ENCODE measurements at regions of chr14 and their contacts with region 1.

Region 1: GRCh38 chr14:60184146-60184904 is 19.1 kb upstream of the DHRS7 start:
- DNase-seq: peak in 3 of 9 experiments; percentile 34 to 87 (median 81)
- ATAC-seq: peak; percentile 85
- H3K4me3 ChIP-seq: peak overlapping the region; percentile 37 to 44
- H3K4me3 Mint-ChIP-seq: peak overlapping the region; percentile 74
- H3K27ac ChIP-seq: peak overlapping the region; percentile 50 to 88
- H3K27ac Mint-ChIP-seq: peak overlapping the region; percentile 86
- H3K4me1 ChIP-seq: peaks cover 4% of the 10 kb centered on the region
- H3K4me1 Mint-ChIP-seq: peaks cover 10% of the 10 kb centered on the region
- H3K27me3 ChIP-seq: no peaks in the 10 kb centered on the region
- H3K27me3 Mint-ChIP-seq: no peaks in the 10 kb centered on the region
- CTCF ChIP-seq: peak; percentile 90

Region 2: GRCh38 chr14:59126710-59127432 is 1057.5 kb before region 1 on chr14:
- CTCF ChIA-PET with region 1: interaction called, 7 read pairs
- POLR2A ChIA-PET with region 1: no interaction called
- intact Hi-C with region 1: loop called in 1 of 2 experiments (anchors 2 kb)
- DNase-seq: peak in 4 of 9 experiments; percentile 13 to 75 (median 42)
- ATAC-seq: peak; percentile 74
- H3K4me3 ChIP-seq: no peak overlapping the region
- H3K4me3 Mint-ChIP-seq: no peak overlapping the region
- H3K27ac ChIP-seq: no peak overlapping the region
- H3K27ac Mint-ChIP-seq: no peak overlapping the region
- H3K4me1 ChIP-seq: no peaks in the 10 kb centered on the region
- H3K4me1 Mint-ChIP-seq: no peaks in the 10 kb centered on the region
- H3K27me3 ChIP-seq: no peaks in the 10 kb centered on the region
- H3K27me3 Mint-ChIP-seq: peaks cover 27% of the 10 kb centered on the region
- CTCF ChIP-seq: peak; percentile 93

Region 3: GRCh38 chr14:59520224-59520623 is 664.1 kb before region 1 on chr14:
- CTCF ChIA-PET with region 1: no interaction called
- POLR2A ChIA-PET with region 1: no interaction called
- intact Hi-C with region 1: no loop called
- DNase-seq: no peak
- ATAC-seq: no peak
- H3K4me3 ChIP-seq: no peak overlapping the region
- H3K4me3 Mint-ChIP-seq: no peak overlapping the region
- H3K27ac ChIP-seq: no peak overlapping the region
- H3K27ac Mint-ChIP-seq: no peak overlapping the region
- H3K4me1 ChIP-seq: no peaks in the 10 kb centered on the region
- H3K4me1 Mint-ChIP-seq: no peaks in the 10 kb centered on the region
- H3K27me3 ChIP-seq: no peaks in the 10 kb centered on the region
- H3K27me3 Mint-ChIP-seq: peaks cover 3% of the 10 kb centered on the region
- CTCF ChIP-seq: no peak

Region 4: GRCh38 chr14:59576332-59577294 is 607.7 kb before region 1 on chr14 and contains the start of gene CCDC175:
- CTCF ChIA-PET with region 1: no interaction called
- POLR2A ChIA-PET with region 1: no interaction called
- intact Hi-C with region 1: loop called in 1 of 2 experiments (anchors 5 kb)
- DNase-seq: peak; percentile 50 to 89 (median 82)
- ATAC-seq: peak; percentile 98
- H3K4me3 ChIP-seq: peak within 1 kb of the TSS; percentile 55 to 58
- H3K4me3 Mint-ChIP-seq: peak within 1 kb of the TSS; percentile 72
- H3K27ac ChIP-seq: no peak within 1 kb of the TSS
- H3K27ac Mint-ChIP-seq: no peak within 1 kb of the TSS
- H3K4me1 ChIP-seq: peaks cover 9% of the 10 kb centered on the region
- H3K4me1 Mint-ChIP-seq: peaks cover 10% of the 10 kb centered on the region
- H3K27me3 ChIP-seq: peaks cover 0 to 4% of the 10 kb centered on the region in 2 experiments
- H3K27me3 Mint-ChIP-seq: peaks cover 27% of the 10 kb centered on the region
- CTCF ChIP-seq: peak; percentile 85
- total RNA-seq, gene CCDC175: not detected

Region 5: GRCh38 chr14:59776468-59776867 is 407.9 kb before region 1 on chr14:
- CTCF ChIA-PET with region 1: no interaction called
- POLR2A ChIA-PET with region 1: no interaction called
- intact Hi-C with region 1: no loop called
- DNase-seq: no peak
- ATAC-seq: no peak
- H3K4me3 ChIP-seq: no peak overlapping the region
- H3K4me3 Mint-ChIP-seq: no peak overlapping the region
- H3K27ac ChIP-seq: no peak overlapping the region
- H3K27ac Mint-ChIP-seq: no peak overlapping the region
- H3K4me1 ChIP-seq: no peaks in the 10 kb centered on the region
- H3K4me1 Mint-ChIP-seq: no peaks in the 10 kb centered on the region
- H3K27me3 ChIP-seq: no peaks in the 10 kb centered on the region
- H3K27me3 Mint-ChIP-seq: peaks cover 14% of the 10 kb centered on the region
- CTCF ChIP-seq: no peak

Region 6: DNA sequence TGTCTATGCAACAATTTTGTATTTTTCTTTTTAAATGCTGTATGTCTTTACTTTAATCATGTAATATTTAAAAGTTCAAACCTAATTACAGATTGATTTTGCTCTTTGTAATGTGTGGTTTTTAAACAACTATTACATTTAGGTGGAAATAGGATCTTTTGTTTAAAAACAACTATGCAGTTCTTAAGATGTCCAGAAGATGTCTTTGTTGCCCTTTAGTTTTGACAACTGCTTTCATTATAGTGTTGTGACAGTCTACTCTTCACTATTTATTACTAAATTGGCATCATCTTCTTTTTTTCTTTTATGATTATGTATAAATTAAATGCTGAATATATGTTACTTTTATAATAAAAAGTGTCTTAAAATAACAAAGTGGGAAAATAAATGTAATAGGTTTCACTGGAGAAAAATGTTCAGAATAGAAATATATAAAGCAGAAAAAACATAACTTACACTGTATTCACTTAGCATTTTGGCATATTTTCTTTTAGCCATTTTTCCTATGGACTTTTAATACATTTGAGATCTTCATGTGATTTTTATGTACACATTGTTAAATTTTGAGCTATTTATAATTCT is 119.7 kb before region 1 on chr14:
- CTCF ChIA-PET with region 1: interaction called, 107 read pairs
- POLR2A ChIA-PET with region 1: interaction called, 3 read pairs
- intact Hi-C with region 1: loop called (anchors 1 kb)
- DNase-seq: peak in 2 of 9 experiments; percentile 53 to 66
- ATAC-seq: peak; percentile 80
- H3K4me3 ChIP-seq: no peak overlapping the region
- H3K4me3 Mint-ChIP-seq: no peak overlapping the region
- H3K27ac ChIP-seq: no peak overlapping the region
- H3K27ac Mint-ChIP-seq: no peak overlapping the region
- H3K4me1 ChIP-seq: no peaks in the 10 kb centered on the region
- H3K4me1 Mint-ChIP-seq: no peaks in the 10 kb centered on the region
- H3K27me3 ChIP-seq: no peaks in the 10 kb centered on the region
- H3K27me3 Mint-ChIP-seq: peaks cover 2% of the 10 kb centered on the region
- CTCF ChIP-seq: peak; percentile 71

Region 7: DNA sequence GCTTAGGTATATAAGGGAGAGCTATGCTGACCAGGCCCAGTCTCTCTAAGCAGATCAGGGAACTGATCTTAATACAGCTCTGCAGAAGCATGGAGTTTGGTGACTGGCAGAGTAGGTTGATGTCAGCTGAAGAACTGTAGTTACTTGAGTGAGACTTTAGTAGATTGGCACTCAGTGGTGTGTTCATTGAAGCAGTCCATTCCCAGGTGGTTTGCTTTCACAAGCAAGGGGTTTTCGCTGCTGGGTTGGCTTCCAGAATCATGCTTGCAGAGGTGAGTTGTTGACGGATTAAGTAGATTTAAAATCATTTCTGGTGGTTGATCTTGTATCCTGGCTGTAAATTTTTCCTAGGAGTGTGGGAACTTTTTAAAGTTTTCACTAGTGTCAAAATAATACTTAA is 12.6 kb before region 1 on chr14:
- CTCF ChIA-PET with region 1: interaction called, 42 read pairs
- POLR2A ChIA-PET with region 1: interaction called, 27 read pairs
- intact Hi-C with region 1: loop called in 1 of 2 experiments (anchors 2 kb)
- DNase-seq: no peak
- ATAC-seq: no peak
- H3K4me3 ChIP-seq: no peak overlapping the region
- H3K4me3 Mint-ChIP-seq: no peak overlapping the region
- H3K27ac ChIP-seq: no peak overlapping the region
- H3K27ac Mint-ChIP-seq: no peak overlapping the region
- H3K4me1 ChIP-seq: peaks cover under 1% of the 10 kb centered on the region
- H3K4me1 Mint-ChIP-seq: peaks cover 1% of the 10 kb centered on the region
- H3K27me3 ChIP-seq: peaks cover 0 to 2% of the 10 kb centered on the region in 2 experiments
- H3K27me3 Mint-ChIP-seq: peaks cover 6% of the 10 kb centered on the region
- CTCF ChIP-seq: no peak

Region 8: DNA sequence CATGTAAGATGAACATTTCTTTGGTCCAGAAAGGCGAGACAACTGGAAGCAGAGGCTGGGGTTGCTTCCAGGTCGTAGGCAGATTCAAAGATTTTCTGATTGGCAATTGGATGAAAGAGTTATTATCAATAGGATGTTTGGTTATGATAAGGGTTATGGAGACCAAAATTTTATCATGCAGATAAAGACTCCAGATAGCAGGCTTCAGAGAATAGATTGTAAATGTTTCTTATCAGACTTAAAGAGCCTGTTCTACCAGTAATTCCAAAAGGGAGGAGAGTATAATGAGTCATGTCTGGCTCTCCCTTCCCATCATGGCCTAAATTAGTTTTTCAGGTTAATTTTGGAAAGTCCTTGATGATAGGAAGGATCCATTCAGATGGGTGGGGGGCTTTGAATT is 246.0 kb after region 1 on chr14:
- CTCF ChIA-PET with region 1: no interaction called
- POLR2A ChIA-PET with region 1: no interaction called
- intact Hi-C with region 1: no loop called
- DNase-seq: no peak
- ATAC-seq: no peak
- H3K4me3 ChIP-seq: no peak overlapping the region
- H3K4me3 Mint-ChIP-seq: no peak overlapping the region
- H3K27ac ChIP-seq: no peak overlapping the region
- H3K27ac Mint-ChIP-seq: no peak overlapping the region
- H3K4me1 ChIP-seq: no peaks in the 10 kb centered on the region
- H3K4me1 Mint-ChIP-seq: no peaks in the 10 kb centered on the region
- H3K27me3 ChIP-seq: no peaks in the 10 kb centered on the region
- H3K27me3 Mint-ChIP-seq: peaks cover 5% of the 10 kb centered on the region
- CTCF ChIP-seq: no peak

Region 9: DNA sequence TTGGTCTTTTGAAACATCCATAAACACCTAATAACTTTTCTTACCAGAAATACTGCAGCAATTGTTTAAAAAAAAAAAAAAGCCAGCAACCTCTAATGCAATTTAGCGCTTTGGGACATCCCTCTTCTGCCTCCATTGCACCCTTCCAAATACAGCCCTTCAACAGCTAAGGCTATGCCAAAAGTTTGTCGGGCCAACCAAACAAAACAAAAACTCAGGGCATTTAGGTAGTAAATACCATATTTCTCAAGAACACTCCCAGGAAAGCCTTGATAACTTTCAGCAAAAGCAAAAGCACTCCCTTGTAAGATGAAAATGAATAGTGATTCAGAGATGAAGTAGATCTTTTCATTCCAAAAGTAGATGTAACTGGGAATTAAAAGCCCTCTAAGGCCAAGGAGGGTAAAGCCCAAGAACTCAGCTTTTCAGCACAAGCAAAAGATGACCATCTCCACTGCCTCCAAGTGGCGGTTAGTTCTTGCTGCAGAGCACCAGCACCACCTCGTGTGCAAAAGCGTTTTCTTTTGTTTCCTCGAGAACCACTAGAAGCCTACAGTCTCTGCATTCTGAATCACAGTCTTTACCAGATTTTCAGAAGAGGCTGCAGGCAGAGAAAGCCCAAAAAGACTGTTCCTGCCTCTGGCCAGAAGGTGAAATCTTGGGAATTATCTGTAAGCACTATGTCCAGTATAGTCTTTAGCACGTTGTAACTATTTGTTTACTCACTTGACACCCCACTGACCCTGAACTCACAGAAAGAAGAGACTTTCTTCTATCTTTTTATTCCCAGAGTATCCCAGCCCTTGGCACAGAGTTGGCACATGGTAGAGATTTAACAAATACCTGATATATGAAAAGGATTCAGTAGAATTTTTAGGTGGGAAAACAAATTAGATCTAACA is 377.8 kb after region 1 on chr14:
- CTCF ChIA-PET with region 1: no interaction called
- POLR2A ChIA-PET with region 1: no interaction called
- intact Hi-C with region 1: loop called in 1 of 2 experiments (anchors 10 kb)
- DNase-seq: peak in 2 of 9 experiments; percentile 26 to 36
- ATAC-seq: no peak
- H3K4me3 ChIP-seq: no peak overlapping the region
- H3K4me3 Mint-ChIP-seq: no peak overlapping the region
- H3K27ac ChIP-seq: no peak overlapping the region
- H3K27ac Mint-ChIP-seq: no peak overlapping the region
- H3K4me1 ChIP-seq: no peaks in the 10 kb centered on the region
- H3K4me1 Mint-ChIP-seq: no peaks in the 10 kb centered on the region
- H3K27me3 ChIP-seq: no peaks in the 10 kb centered on the region
- H3K27me3 Mint-ChIP-seq: peaks cover 3% of the 10 kb centered on the region
- CTCF ChIP-seq: no peak